ENCODE measurements at regions of chr10 and their contacts with region 1.

Region 1: DNA sequence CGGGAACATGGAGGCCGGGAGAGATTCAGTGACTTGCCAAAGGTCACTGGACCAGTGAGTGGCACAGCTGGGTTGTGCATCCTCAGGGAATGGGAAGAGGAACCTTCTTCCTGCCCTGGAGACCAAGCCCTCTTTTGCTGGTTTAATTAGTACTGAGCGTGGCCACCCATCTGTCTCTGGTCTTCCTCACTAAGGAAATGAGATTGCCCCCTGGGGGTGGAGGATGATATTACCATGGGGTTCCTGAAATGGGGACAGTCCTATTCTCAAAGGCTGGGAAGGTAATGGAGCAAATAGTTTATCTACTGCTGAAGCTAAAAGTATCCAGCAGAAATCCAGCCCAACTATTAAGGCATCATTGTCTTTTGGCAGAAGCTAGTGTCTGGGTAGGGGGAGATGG is 98.6 kb upstream of the FGFR2 start:
- DNase-seq: peak; percentile 29 to 95
- H3K4me3 ChIP-seq: no peak overlapping the region
- H3K27ac ChIP-seq: no peak overlapping the region
- H3K4me1 ChIP-seq: peaks cover 0 to 8% (median 0%) of the 10 kb centered on the region in 4 experiments; a peak in 1 of 7 replicates
- H3K27me3 ChIP-seq: no peaks in the 10 kb centered on the region
- CTCF ChIP-seq: peak; percentile 30 to 69 (median 52)
- EP300 ChIP-seq: no peak
- POLR2A ChIP-seq: no peak
- RAD21 ChIP-seq: peak; percentile 49 to 65

Region 2: DNA sequence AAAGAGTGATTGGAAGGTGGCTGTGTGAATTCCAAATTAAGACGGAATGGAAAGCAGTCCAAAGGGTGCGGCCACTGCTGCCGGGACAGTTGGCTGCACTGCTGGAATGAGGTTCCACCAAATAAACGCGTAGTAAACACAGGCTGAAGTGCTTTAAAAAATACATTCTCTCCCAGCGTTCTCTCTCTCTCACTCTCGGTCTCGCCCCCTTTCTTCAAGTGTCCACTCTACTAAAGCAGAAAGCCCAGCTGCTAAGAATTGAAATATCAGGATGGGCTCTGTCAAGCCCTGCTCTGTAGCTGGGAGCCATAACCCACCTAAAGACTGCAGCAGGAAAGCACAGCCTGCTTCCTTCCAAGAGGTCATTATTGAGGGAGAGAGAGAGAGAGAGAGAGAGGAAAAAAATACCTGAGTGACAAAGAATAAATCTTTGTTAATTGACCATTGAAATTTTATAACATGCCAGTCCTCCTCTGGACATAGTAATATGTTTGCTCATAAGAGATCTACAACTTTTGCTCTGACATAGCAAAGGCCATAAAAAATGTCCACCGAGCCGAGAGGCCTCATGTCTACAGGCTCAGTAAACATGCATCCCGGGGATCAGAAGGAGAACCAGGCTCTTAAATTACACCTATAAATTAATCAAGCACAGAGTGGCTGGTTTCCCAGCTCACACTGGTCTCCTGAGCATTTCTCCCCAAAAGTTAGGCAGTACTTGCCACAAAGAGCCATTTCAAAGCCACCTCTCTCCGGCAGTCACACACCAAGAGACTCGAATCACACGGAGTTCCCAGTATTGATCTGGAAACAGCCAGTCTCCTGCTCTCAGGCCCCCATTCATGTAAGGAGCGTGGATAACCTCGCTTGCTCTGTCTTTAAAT is 171.4 kb before region 1 on chr10:
- CTCF ChIA-PET with region 1: no interaction called
- POLR2A ChIA-PET with region 1: no interaction called
- DNase-seq: no peak
- H3K4me3 ChIP-seq: no peak overlapping the region
- H3K27ac ChIP-seq: no peak overlapping the region
- H3K4me1 ChIP-seq: peaks cover 0 to 7% (median 3%) of the 10 kb centered on the region in 4 experiments; a peak in 6 of 7 replicates
- H3K27me3 ChIP-seq: no peaks in the 10 kb centered on the region
- CTCF ChIP-seq: no peak
- EP300 ChIP-seq: no peak
- POLR2A ChIP-seq: no peak
- RAD21 ChIP-seq: no peak

Region 3: GRCh38 chr10:121681997-121682687 is 14.7 kb before region 1 on chr10:
- CTCF ChIA-PET with region 1: interaction called, 53 read pairs
- POLR2A ChIA-PET with region 1: no interaction called
- DNase-seq: no peak
- H3K4me3 ChIP-seq: no peak overlapping the region
- H3K27ac ChIP-seq: no peak overlapping the region
- H3K4me1 ChIP-seq: peaks cover 0 to 5% (median 0%) of the 10 kb centered on the region in 4 experiments; a peak in 2 of 7 replicates
- H3K27me3 ChIP-seq: no peaks in the 10 kb centered on the region
- CTCF ChIP-seq: no peak
- EP300 ChIP-seq: no peak
- POLR2A ChIP-seq: no peak
- RAD21 ChIP-seq: no peak

Region 4: GRCh38 chr10:121709675-121710073 is 12.8 kb after region 1 on chr10:
- CTCF ChIA-PET with region 1: interaction called, 33 read pairs
- POLR2A ChIA-PET with region 1: no interaction called
- DNase-seq: no peak
- H3K4me3 ChIP-seq: peak overlapping the region in 1 of 4 experiments; percentile 28; a peak in 3 of 8 replicates
- H3K27ac ChIP-seq: no peak overlapping the region
- H3K4me1 ChIP-seq: peaks cover 9 to 18% (median 18%) of the 10 kb centered on the region in 4 experiments; a peak in 5 of 7 replicates
- H3K27me3 ChIP-seq: no peaks in the 10 kb centered on the region
- CTCF ChIP-seq: no peak
- EP300 ChIP-seq: no peak
- POLR2A ChIP-seq: no peak
- RAD21 ChIP-seq: no peak

Region 5: DNA sequence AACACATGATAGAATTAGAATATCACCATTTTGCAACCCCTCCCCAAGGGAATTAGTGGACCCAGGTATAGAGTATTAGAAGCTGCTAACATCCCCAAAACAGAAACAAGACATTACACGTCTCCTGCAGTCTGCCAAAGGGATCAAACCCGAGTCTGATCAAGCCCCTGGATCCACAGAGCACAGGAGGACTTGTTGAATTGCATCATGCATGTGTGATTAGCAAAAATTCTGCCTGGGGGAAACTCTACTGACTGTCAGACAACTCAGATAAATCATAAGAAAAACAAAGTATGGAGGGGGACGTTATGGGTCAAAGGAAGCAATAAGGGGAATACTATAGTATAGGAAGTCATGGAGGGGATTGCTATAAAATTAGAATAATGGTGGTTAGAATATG is 18.2 kb after region 1 on chr10:
- CTCF ChIA-PET with region 1: interaction called, 33 read pairs
- POLR2A ChIA-PET with region 1: no interaction called
- DNase-seq: no peak
- H3K4me3 ChIP-seq: no peak overlapping the region
- H3K27ac ChIP-seq: no peak overlapping the region
- H3K4me1 ChIP-seq: peaks cover 2 to 8% (median 5%) of the 10 kb centered on the region in 4 experiments; a peak in 3 of 7 replicates
- H3K27me3 ChIP-seq: no peaks in the 10 kb centered on the region
- CTCF ChIP-seq: no peak
- EP300 ChIP-seq: no peak
- POLR2A ChIP-seq: no peak
- RAD21 ChIP-seq: no peak

Region 6: GRCh38 chr10:121722665-121723064 is 25.8 kb after region 1 on chr10:
- CTCF ChIA-PET with region 1: interaction called, 19 read pairs
- POLR2A ChIA-PET with region 1: no interaction called
- DNase-seq: no peak
- H3K4me3 ChIP-seq: no peak overlapping the region
- H3K27ac ChIP-seq: no peak overlapping the region
- H3K4me1 ChIP-seq: peaks cover 0 to 4% (median 2%) of the 10 kb centered on the region in 4 experiments; a peak in 2 of 7 replicates
- H3K27me3 ChIP-seq: no peaks in the 10 kb centered on the region
- CTCF ChIP-seq: no peak
- EP300 ChIP-seq: no peak
- POLR2A ChIP-seq: no peak
- RAD21 ChIP-seq: no peak

Region 7: DNA sequence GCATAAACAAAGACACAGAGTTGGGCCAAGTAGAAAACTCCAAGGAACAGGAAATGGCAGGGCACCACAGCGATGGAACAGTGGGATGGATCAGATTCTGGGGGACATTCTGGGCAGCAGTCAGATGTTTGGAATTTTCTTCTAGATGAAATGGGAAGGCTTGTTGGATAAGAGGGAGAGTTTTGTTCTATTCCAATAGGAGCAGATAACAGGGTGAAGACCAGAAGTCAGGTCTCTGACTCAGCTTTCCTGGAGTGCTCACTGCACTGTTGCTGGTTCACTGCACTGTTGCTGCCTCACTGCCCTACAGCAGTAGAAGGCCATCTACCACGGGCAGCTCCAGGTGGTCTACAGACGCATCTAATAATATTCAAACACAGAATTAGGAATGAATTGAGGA is 95.3 kb after region 1 on chr10:
- CTCF ChIA-PET with region 1: no interaction called
- POLR2A ChIA-PET with region 1: no interaction called
- DNase-seq: no peak
- H3K4me3 ChIP-seq: no peak overlapping the region
- H3K27ac ChIP-seq: no peak overlapping the region
- H3K4me1 ChIP-seq: no peaks in the 10 kb centered on the region
- H3K27me3 ChIP-seq: no peaks in the 10 kb centered on the region
- CTCF ChIP-seq: no peak
- EP300 ChIP-seq: no peak
- POLR2A ChIP-seq: no peak
- RAD21 ChIP-seq: no peak